ENCODE measurements at regions of chr11 and their contacts with region 1.

Region 1: GRCh38 chr11:95150946-95151684 is 61.5 kb downstream of the ENDOD1 start:
- DNase-seq: peak; percentile 89
- H3K4me3 Mint-ChIP-seq: peak overlapping the region; percentile 87
- H3K27ac Mint-ChIP-seq: peak overlapping the region; percentile 92
- H3K4me1 Mint-ChIP-seq: peaks cover 51% of the 10 kb centered on the region
- H3K27me3 Mint-ChIP-seq: no peaks in the 10 kb centered on the region

Region 2: DNA sequence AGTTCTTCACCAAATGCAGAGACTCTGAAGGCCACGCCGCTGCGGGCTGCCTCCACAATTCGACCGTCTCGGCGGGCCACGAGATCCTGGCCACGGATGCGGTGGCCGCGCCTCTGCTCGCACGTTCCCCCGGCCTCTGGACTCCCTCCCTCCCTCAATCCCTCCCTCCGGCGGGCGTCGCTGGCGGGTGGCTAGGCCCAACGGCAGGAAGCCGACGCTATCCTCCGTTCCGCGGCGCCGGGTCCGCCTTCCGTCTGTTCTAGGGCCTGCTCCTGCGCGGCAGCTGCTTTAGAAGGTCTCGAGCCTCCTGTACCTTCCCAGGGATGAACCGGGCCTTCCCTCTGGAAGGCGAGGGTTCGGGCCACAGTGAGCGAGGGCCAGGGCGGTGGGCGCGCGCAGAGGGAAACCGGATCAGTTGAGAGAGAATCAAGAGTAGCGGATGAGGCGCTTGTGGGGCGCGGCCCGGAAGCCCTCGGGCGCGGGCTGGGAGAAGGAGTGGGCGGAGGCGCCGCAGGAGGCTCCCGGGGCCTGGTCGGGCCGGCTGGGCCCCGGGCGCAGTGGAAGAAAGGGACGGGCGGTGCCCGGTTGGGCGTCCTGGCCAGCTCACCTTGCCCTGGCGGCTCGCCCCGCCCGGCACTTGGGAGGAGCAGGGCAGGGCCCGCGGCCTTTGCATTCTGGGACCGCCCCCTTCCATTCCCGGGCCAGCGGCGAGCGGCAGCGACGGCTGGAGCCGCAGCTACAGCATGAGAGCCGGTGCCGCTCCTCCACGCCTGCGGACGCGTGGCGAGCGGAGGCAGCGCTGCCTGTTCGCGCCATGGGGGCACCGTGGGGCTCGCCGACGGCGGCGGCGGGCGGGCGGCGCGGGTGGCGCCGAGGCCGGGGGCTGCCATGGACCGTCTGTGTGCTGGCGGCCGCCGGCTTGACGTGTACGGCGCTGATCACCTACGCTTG is 607.1 kb before region 1 on chr11 and contains the start of gene FUT4:
- intact Hi-C with region 1: loop called (anchors 5 kb)
- DNase-seq: peak; percentile 72
- H3K4me3 Mint-ChIP-seq: peak within 1 kb of the TSS; percentile 99
- H3K27ac Mint-ChIP-seq: peak within 1 kb of the TSS; percentile 100
- H3K4me1 Mint-ChIP-seq: peaks cover 32% of the 10 kb centered on the region
- H3K27me3 Mint-ChIP-seq: no peaks in the 10 kb centered on the region
- total RNA-seq, gene FUT4: 8.4 and 8.9 TPM in 2 replicates

Region 3: GRCh38 chr11:95067039-95067840 is 83.9 kb before region 1 on chr11:
- intact Hi-C with region 1: loop called (anchors 1 kb)
- DNase-seq: peak; percentile 70
- H3K4me3 Mint-ChIP-seq: peak overlapping the region; percentile 91
- H3K27ac Mint-ChIP-seq: peak overlapping the region; percentile 93
- H3K4me1 Mint-ChIP-seq: peaks cover 18% of the 10 kb centered on the region
- H3K27me3 Mint-ChIP-seq: peaks cover 16% of the 10 kb centered on the region

Region 4: GRCh38 chr11:95254131-95254704 is 103.1 kb after region 1 on chr11:
- intact Hi-C with region 1: no loop called
- DNase-seq: peak; percentile 78
- H3K4me3 Mint-ChIP-seq: peak overlapping the region; percentile 68
- H3K27ac Mint-ChIP-seq: peak overlapping the region; percentile 77
- H3K4me1 Mint-ChIP-seq: peaks cover 39% of the 10 kb centered on the region
- H3K27me3 Mint-ChIP-seq: no peaks in the 10 kb centered on the region

Region 5: DNA sequence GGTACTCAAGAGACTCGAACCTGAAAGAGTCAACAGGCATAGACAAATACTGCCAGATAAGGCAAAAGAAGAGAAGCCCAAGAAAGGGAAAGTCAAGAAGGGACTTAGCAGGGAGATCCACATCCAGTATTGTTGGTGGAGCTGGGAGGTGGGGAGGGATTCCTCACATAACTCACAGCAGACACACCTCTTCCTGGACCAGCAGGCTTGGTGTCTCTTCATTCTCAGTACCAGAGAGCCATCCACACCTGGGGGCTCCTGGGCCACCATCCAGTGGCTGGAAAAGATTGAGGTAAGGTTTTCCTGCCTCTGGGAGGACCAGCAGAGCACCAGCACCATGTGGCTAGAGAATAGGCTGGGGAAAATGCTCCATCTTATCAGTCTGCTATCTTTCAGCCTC is 241.5 kb after region 1 on chr11:
- intact Hi-C with region 1: no loop called
- DNase-seq: no peak
- H3K4me3 Mint-ChIP-seq: no peak overlapping the region
- H3K27ac Mint-ChIP-seq: no peak overlapping the region
- H3K4me1 Mint-ChIP-seq: no peaks in the 10 kb centered on the region
- H3K27me3 Mint-ChIP-seq: peaks cover 4% of the 10 kb centered on the region

Region 6: GRCh38 chr11:95556342-95557163 is 405.4 kb after region 1 on chr11:
- intact Hi-C with region 1: loop called (anchors 1 kb)
- DNase-seq: no peak
- H3K4me3 Mint-ChIP-seq: no peak overlapping the region
- H3K27ac Mint-ChIP-seq: peak overlapping the region; percentile 91
- H3K4me1 Mint-ChIP-seq: peaks cover 37% of the 10 kb centered on the region
- H3K27me3 Mint-ChIP-seq: no peaks in the 10 kb centered on the region

Region 7: DNA sequence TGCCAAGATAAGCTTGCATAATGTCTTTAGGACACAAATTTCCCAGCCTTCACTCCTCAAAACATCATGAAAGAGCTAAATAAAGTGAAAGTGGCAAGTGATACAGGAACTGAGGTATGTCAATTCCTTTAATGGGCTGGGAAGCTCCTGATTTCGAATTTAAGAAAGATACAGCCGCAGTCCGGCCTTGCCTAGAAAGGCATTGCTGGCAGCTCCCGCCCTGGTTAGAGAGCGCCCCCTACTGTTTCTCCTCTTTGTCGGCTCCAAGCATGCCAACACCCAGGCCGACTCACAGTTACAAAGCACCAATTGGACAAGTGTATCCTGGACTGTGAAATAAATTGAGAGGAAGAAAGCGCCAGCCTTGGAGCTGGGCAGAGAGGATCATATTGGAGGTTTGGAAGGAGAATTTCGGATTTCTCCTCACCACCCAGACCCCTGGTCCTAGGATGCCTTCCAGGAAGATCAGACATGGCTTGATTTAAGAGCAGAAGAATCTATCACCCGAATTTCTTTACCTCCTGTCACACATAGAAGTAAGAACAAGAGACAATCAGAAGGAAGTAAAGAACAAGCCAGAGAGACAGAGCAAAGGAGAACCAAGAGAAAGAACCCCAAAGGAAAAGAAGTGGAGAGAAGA is 554.5 kb after region 1 on chr11:
- intact Hi-C with region 1: loop called (anchors 1 kb)
- DNase-seq: peak; percentile 73
- H3K4me3 Mint-ChIP-seq: no peak overlapping the region
- H3K27ac Mint-ChIP-seq: no peak overlapping the region
- H3K4me1 Mint-ChIP-seq: peaks cover 19% of the 10 kb centered on the region
- H3K27me3 Mint-ChIP-seq: no peaks in the 10 kb centered on the region

Region 8: GRCh38 chr11:96424693-96425092 is 1273.6 kb after region 1 on chr11:
- intact Hi-C with region 1: loop called (anchors 2 kb)
- DNase-seq: no peak
- H3K4me3 Mint-ChIP-seq: no peak overlapping the region
- H3K27ac Mint-ChIP-seq: no peak overlapping the region
- H3K4me1 Mint-ChIP-seq: peaks cover 17% of the 10 kb centered on the region
- H3K27me3 Mint-ChIP-seq: peaks cover 33% of the 10 kb centered on the region